Aorta (tissue), 5 donors: ENCODE measurements at regions of chr6 and their contacts with region 1.

Region 1: GRCh38 chr6:85772641-85773040 is 130.0 kb upstream of the SYNCRIP start:
- DNase-seq: no peak
- ATAC-seq: no peak
- H3K4me3 ChIP-seq: no peak overlapping the region
- H3K27ac ChIP-seq: no peak overlapping the region
- H3K4me1 ChIP-seq: peaks cover 0 to 3% of the 10 kb centered on the region in 2 donors
- H3K27me3 ChIP-seq: no peaks in the 10 kb centered on the region

Region 2: DNA sequence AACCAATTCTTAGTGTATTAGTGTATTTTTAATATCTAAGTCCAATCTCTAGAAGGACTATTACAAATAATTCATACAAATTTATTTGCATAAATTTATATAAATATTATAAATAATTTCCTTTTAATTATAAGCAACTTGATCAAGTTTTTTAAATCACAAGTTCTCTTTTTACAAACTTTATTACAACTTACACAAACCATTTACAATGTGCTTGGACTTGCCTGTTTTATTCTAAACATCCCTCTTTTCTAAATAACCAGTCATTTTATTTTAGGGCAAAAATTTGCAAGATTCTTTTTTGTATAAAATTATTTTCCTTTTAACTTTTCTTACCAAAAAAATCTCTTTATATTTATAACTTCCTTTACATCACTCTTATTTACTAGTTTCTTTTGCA is 46.4 kb before region 1 on chr6:
- intact Hi-C with region 1: no loop called
- DNase-seq: no peak
- ATAC-seq: no peak
- H3K4me3 ChIP-seq: no peak overlapping the region
- H3K27ac ChIP-seq: no peak overlapping the region
- H3K4me1 ChIP-seq: no peaks in the 10 kb centered on the region
- H3K27me3 ChIP-seq: no peaks in the 10 kb centered on the region

Region 3: GRCh38 chr6:87308970-87309369 is 1536.3 kb after region 1 on chr6:
- intact Hi-C with region 1: loop called in 1 of 2 experiments (anchors 10 kb)
- DNase-seq: no peak
- ATAC-seq: no peak
- H3K4me3 ChIP-seq: no peak overlapping the region
- H3K27ac ChIP-seq: no peak overlapping the region
- H3K4me1 ChIP-seq: no peaks in the 10 kb centered on the region
- H3K27me3 ChIP-seq: no peaks in the 10 kb centered on the region